Panc1 (cell line): ENCODE measurements at regions of chr7 and their contacts with region 1.

Region 1: GRCh38 chr7:44463169-44463808 is 27.2 kb downstream of the NUDCD3 start:
- DNase-seq: no peak
- ATAC-seq: no peak
- H3K4me3 ChIP-seq: no peak overlapping the region
- H3K27ac ChIP-seq: no peak overlapping the region
- H3K4me1 ChIP-seq: no peaks in the 10 kb centered on the region
- H3K27me3 ChIP-seq: no peaks in the 10 kb centered on the region
- CTCF ChIP-seq: peak; percentile 43; the same call in 1 of the 2 replicates

Region 2: GRCh38 chr7:44206008-44206407 is 257.3 kb before region 1 on chr7:
- CTCF ChIA-PET with region 1: no interaction called
- POLR2A ChIA-PET with region 1: interaction called, 17 read pairs
- in situ Hi-C with region 1: no loop called
- intact Hi-C with region 1: no loop called
- DNase-seq: no peak
- ATAC-seq: no peak
- H3K4me3 ChIP-seq: no peak overlapping the region
- H3K27ac ChIP-seq: no peak overlapping the region
- H3K4me1 ChIP-seq: peaks cover 6% of the 10 kb centered on the region
- H3K27me3 ChIP-seq: no peaks in the 10 kb centered on the region
- CTCF ChIP-seq: no peak